Caco-2 (cell line): ENCODE measurements at regions of chr11 and their contacts with region 1.

Region 1: DNA sequence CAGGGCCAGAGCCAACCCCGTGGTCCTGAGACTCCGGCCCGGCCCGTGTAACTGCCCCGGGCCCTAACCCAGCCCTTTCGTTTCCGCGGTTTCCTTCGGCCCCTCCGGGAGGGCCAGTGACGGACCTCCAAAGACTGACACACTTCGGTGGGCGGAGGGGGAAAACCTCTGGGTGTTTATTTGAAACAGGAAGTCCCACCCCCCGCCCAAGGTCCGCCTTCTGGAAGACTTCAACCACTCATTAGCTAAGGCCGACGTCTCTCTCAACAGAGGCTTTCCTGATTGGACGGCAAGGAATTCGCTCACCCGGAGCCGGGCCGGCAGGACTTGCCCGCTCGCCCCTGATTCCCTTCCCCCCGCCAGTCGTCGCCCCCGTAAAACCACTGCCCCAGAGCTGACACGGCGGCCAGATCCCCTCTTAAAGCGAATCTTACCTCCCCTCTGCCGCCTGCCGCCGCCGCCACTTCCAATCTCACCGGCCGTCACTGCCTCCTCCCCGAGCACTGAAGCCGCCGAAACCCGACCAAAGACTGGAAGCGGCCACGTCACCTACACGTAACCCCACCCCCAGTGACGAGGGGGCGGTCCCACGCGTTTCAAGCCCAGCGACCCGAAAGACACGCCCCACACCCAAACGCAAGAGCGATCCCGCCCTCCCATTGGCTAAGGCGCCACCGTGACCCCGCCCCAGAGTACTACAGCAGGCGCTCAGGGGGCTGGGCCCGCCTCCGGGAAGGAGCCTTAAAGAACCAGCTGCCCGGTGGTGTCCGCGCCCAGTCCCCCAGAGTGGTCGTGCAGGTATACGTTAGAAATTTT is at the start of gene STX5:
- DNase-seq: peak; percentile 99
- H3K4me3 ChIP-seq: peak within 1 kb of the TSS; percentile 66
- H3K4me3 Mint-ChIP-seq: peak within 1 kb of the TSS; percentile 90
- H3K27ac Mint-ChIP-seq: peak within 1 kb of the TSS; percentile 100
- H3K4me1 ChIP-seq: no peaks in the 10 kb centered on the region
- H3K4me1 Mint-ChIP-seq: peaks cover 5% of the 10 kb centered on the region
- H3K27me3 ChIP-seq: no peaks in the 10 kb centered on the region
- H3K27me3 Mint-ChIP-seq: no peaks in the 10 kb centered on the region
- CTCF ChIP-seq: no peak
- total RNA-seq, gene STX5: 39.9 and 44.2 TPM in 2 replicates

Region 2: DNA sequence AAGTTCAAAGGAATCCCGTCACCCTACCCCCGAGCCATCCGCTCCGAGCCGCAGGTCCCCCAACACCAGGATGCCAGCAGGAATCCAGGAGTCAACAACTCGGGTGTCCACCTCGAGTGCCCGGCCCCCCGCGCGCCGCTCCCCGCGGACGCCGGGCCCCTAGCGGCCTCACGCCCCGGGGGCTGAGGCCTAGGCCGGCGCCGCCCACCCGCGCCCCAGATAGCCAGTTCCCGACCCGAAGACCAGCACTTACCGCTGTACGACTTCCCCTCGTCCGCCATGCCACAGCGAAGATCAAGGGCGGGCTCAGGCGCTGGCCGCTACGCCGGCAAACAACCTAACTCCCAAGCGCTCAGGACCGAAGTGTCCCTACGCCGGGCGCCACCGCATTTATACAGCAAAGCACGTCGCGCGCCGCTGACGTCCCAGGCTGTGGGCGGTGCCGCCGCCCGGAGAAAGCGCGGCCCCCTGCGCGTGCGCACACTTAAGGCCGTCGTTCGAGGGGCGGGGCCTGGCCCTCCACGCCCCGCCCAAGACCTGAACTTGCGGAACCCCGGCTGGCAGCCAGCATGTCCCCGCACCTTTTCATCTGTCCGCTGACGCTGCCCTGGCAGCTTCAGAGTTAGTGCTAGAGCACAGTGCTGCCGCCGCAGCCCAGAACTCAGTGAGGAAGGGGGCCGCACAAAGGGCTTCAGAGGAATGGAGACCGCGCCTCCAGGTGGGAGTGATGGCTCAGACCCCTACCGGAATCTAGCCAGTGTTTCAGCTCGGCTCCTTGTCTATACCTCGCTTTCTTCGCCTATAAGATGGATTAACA is 26.4 kb before region 1 on chr11 and contains the start of gene NXF1:
- CTCF ChIA-PET with region 1: no interaction called
- POLR2A ChIA-PET with region 1: interaction called, 9 read pairs
- intact Hi-C with region 1: loop called (anchors 1 kb)
- DNase-seq: peak; percentile 94 to 98
- H3K4me3 ChIP-seq: peak within 1 kb of the TSS; percentile 58
- H3K4me3 Mint-ChIP-seq: peak within 1 kb of the TSS; percentile 92
- H3K27ac Mint-ChIP-seq: peak within 1 kb of the TSS; percentile 98
- H3K4me1 ChIP-seq: no peaks in the 10 kb centered on the region; the same call in 1 of the 2 replicates
- H3K4me1 Mint-ChIP-seq: peaks cover 11% of the 10 kb centered on the region
- H3K27me3 ChIP-seq: no peaks in the 10 kb centered on the region
- H3K27me3 Mint-ChIP-seq: no peaks in the 10 kb centered on the region
- CTCF ChIP-seq: peak in 1 of 2 experiments; percentile 27
- total RNA-seq, gene NXF1: 77.5 and 77.6 TPM in 2 replicates

Region 3: GRCh38 chr11:62880803-62881578 is 49.3 kb after region 1 on chr11 and contains the start of gene SLC3A2:
- CTCF ChIA-PET with region 1: no interaction called
- POLR2A ChIA-PET with region 1: interaction called, 10 read pairs
- intact Hi-C with region 1: no loop called
- DNase-seq: peak; percentile 87 to 92
- H3K4me3 ChIP-seq: peak within 1 kb of the TSS; percentile 99
- H3K4me3 Mint-ChIP-seq: peak within 1 kb of the TSS; percentile 97
- H3K27ac Mint-ChIP-seq: peak within 1 kb of the TSS; percentile 99
- H3K4me1 ChIP-seq: peaks cover 51% of the 10 kb centered on the region
- H3K4me1 Mint-ChIP-seq: peaks cover 43% of the 10 kb centered on the region
- H3K27me3 ChIP-seq: no peaks in the 10 kb centered on the region
- H3K27me3 Mint-ChIP-seq: no peaks in the 10 kb centered on the region
- CTCF ChIP-seq: peak; percentile 77 to 78
- total RNA-seq, gene SLC3A2: 763 and 879 TPM in 2 replicates